ENCODE measurements at regions of chr21 and their contacts with region 1.

Region 1: GRCh38 chr21:31142600-31142999 is 104.3 kb upstream of the KRTAP19-8 start:
- DNase-seq: peak in 31 of 35 experiments; percentile 15 to 66 (median 40)
- ATAC-seq: peak; percentile 83 to 99 (median 89)
- H3K4me3 ChIP-seq: no peak overlapping the region
- H3K4me3 Mint-ChIP-seq: no peak overlapping the region
- H3K27ac ChIP-seq: no peak overlapping the region
- H3K27ac Mint-ChIP-seq: peak overlapping the region in 1 of 2 donors; percentile 4
- H3K4me1 ChIP-seq: peaks cover 7 to 21% of the 10 kb centered on the region in 2 experiments
- H3K4me1 Mint-ChIP-seq: peaks cover 14 to 39% (median 38%) of the 10 kb centered on the region in 3 donors
- H3K27me3 ChIP-seq: peaks cover 0 to 4% of the 10 kb centered on the region in 2 experiments
- H3K27me3 Mint-ChIP-seq: no peaks in the 10 kb centered on the region

Region 2: DNA sequence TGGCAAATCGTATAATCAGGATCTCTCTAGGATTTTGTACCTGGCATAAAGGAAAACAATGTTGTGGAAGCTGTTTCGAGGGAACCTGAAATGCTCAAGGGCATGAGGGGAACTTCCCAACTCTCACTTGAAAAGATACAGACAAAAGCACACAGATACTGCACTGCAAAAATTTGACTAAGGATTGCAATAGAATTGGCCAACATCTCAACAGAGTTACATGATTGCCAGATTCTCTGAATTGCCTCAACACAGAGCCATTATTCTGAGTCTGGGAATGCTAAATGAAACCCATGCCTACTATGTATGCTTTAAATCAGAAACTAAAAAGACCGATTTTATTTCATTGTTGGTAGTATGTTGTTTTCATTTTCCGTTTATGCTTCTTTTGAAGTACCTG is 120.3 kb before region 1 on chr21:
- CTCF ChIA-PET with region 1: no interaction called
- POLR2A ChIA-PET with region 1: no interaction called
- DNase-seq: no peak
- ATAC-seq: no peak
- H3K4me3 ChIP-seq: no peak overlapping the region
- H3K4me3 Mint-ChIP-seq: no peak overlapping the region
- H3K27ac ChIP-seq: no peak overlapping the region
- H3K27ac Mint-ChIP-seq: no peak overlapping the region
- H3K4me1 ChIP-seq: no peaks in the 10 kb centered on the region
- H3K4me1 Mint-ChIP-seq: peaks cover 0 to 2% (median 2%) of the 10 kb centered on the region in 3 donors
- H3K27me3 ChIP-seq: peaks cover 0 to 3% of the 10 kb centered on the region in 2 experiments
- H3K27me3 Mint-ChIP-seq: peaks cover 17 to 34% of the 10 kb centered on the region in 2 donors

Region 3: GRCh38 chr21:31158789-31159581 is 16.4 kb after region 1 on chr21:
- CTCF ChIA-PET with region 1: interaction called in 1 of 2 experiments, 3 read pairs
- POLR2A ChIA-PET with region 1: interaction called, 6 to 21 read pairs
- DNase-seq: peak in 6 of 35 experiments; percentile 18 to 57 (median 34)
- ATAC-seq: peak; percentile 89 to 95 (median 95)
- H3K4me3 ChIP-seq: peak overlapping the region in 1 of 2 donors; percentile 17
- H3K4me3 Mint-ChIP-seq: peak overlapping the region; percentile 65 to 71 (median 66)
- H3K27ac ChIP-seq: peak overlapping the region; percentile 73
- H3K27ac Mint-ChIP-seq: peak overlapping the region; percentile 92 to 98
- H3K4me1 ChIP-seq: peaks cover 44 to 51% of the 10 kb centered on the region in 2 experiments
- H3K4me1 Mint-ChIP-seq: peaks cover 68 to 84% (median 81%) of the 10 kb centered on the region in 3 donors
- H3K27me3 ChIP-seq: no peaks in the 10 kb centered on the region
- H3K27me3 Mint-ChIP-seq: no peaks in the 10 kb centered on the region

Measured in T-cell (primary cell).